Activated CD4-positive, alpha-beta T cell treated with anti-CD3 and anti-CD28 coated beads for 36 hours (primary cell): ENCODE measurements at regions of chr9 and their contacts with region 1.

Region 1: GRCh38 chr9:32378993-32379729 is 5.3 kb upstream of the ACO1 start:
- DNase-seq: peak; percentile 56
- ATAC-seq: peak; percentile 85
- H3K4me3 Mint-ChIP-seq: no peak overlapping the region
- H3K27ac Mint-ChIP-seq: no peak overlapping the region
- H3K4me1 Mint-ChIP-seq: peaks cover 15% of the 10 kb centered on the region
- H3K27me3 Mint-ChIP-seq: peaks cover 17% of the 10 kb centered on the region

Region 2: GRCh38 chr9:32398207-32398606 is 19.0 kb after region 1 on chr9:
- CTCF ChIA-PET with region 1: interaction called, 12 read pairs
- POLR2A ChIA-PET with region 1: interaction called, 3 read pairs
- intact Hi-C with region 1: no loop called
- DNase-seq: no peak
- ATAC-seq: no peak
- H3K4me3 Mint-ChIP-seq: no peak overlapping the region
- H3K27ac Mint-ChIP-seq: no peak overlapping the region
- H3K4me1 Mint-ChIP-seq: no peaks in the 10 kb centered on the region
- H3K27me3 Mint-ChIP-seq: no peaks in the 10 kb centered on the region

Region 3: DNA sequence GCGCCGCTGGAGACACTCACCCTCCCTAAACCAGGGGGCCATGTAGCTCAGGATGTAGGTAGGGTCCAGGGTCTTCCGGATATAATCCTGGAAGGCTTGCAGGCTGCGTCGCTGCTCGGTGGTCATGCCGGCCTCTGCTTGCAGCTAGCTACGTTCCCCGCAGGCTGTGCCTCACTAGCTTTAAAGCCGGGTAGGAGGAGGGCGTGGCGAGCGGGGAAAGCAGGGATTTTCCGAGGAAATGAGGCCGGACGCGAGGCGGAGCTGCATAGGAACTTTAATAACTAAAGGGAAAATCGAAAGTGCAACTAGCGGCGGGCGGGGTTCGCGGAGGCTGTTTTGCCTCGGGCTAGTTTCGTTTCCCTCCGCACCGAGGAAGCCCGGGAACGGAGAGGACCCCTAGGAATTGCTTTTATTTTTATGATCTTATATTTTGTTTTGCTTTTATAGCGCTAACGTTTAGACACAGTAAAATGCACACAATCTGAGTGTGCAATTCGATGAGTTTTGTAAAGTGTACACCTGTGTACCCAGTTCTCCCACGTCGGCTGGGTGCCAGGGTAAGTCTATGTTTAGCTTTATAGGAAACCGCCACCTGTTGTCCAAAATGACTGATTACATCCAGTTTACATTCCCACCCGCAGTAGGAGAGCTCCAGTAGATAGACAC is 147.0 kb after region 1 on chr9 and contains the start of gene RIGI:
- CTCF ChIA-PET with region 1: interaction called, 41 read pairs
- POLR2A ChIA-PET with region 1: interaction called, 3 read pairs
- intact Hi-C with region 1: loop called (anchors 1 kb)
- DNase-seq: peak; percentile 86
- ATAC-seq: peak; percentile 78
- H3K4me3 Mint-ChIP-seq: peak within 1 kb of the TSS; percentile 80
- H3K27ac Mint-ChIP-seq: peak within 1 kb of the TSS; percentile 90
- H3K4me1 Mint-ChIP-seq: peaks cover 41% of the 10 kb centered on the region
- H3K27me3 Mint-ChIP-seq: no peaks in the 10 kb centered on the region
- total RNA-seq, gene RIGI: 8.9 to 9.7 TPM

Region 4: GRCh38 chr9:32566770-32567169 is 187.6 kb after region 1 on chr9:
- CTCF ChIA-PET with region 1: interaction called, 530 read pairs
- POLR2A ChIA-PET with region 1: interaction called, 5 read pairs
- intact Hi-C with region 1: no loop called
- DNase-seq: no peak
- ATAC-seq: no peak
- H3K4me3 Mint-ChIP-seq: no peak overlapping the region
- H3K27ac Mint-ChIP-seq: no peak overlapping the region
- H3K4me1 Mint-ChIP-seq: peaks cover 20% of the 10 kb centered on the region
- H3K27me3 Mint-ChIP-seq: no peaks in the 10 kb centered on the region

Region 5: DNA sequence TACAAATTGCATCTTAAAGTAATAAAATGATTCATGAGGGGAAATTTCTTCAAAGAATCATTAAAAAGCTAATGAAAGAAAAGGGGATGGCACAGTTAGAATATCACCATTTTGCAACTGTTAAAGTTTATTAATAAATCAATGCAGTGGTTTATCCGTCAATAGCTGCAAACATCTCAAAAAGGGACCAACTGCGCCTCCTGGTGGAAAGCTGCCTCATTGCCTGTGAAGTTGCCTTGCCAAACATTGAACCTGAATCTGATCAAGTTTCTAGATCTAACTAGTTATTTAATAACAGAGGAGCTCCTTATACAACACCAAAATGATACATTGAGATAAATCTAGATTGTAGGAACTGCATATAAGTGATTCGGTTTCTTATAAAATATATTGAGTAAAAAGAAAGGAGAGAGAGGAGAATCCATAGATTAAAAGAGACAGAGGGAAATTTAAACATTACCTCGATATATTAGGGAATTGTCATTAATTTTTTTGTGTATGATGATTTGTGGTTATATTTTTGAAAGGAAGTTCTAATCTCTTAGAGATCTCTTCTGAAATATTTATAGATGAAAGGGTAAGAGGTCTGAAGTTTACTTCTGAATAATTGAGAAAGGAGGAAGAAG is 200.7 kb after region 1 on chr9:
- CTCF ChIA-PET with region 1: interaction called, 530 read pairs
- POLR2A ChIA-PET with region 1: interaction called, 8 read pairs
- intact Hi-C with region 1: loop called (anchors 1 kb)
- DNase-seq: peak; percentile 87
- ATAC-seq: no peak
- H3K4me3 Mint-ChIP-seq: no peak overlapping the region
- H3K27ac Mint-ChIP-seq: no peak overlapping the region
- H3K4me1 Mint-ChIP-seq: no peaks in the 10 kb centered on the region
- H3K27me3 Mint-ChIP-seq: peaks cover 8% of the 10 kb centered on the region

Region 6: DNA sequence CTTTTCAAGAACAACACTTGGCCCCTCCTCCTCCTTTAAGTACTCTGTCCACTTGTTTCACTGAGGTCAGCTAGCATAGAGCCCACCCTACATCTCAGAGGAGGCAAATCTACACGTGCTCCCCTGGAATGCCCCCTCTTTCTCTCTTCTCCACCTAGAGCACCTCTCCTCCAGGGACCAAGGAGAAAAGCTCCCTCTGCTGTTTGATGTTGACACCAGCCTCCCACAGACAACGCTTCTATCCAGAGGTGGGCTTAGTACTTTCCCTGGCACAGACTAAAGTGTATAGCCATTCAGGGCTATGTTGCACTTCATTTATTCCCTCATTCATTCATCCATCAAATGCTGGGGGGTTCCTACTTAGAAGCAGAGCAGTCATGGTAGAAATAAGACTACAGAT is 324.5 kb after region 1 on chr9:
- CTCF ChIA-PET with region 1: interaction called, 5 read pairs
- POLR2A ChIA-PET with region 1: no interaction called
- intact Hi-C with region 1: loop called in 1 of 2 experiments (anchors 5 kb)
- DNase-seq: no peak
- ATAC-seq: no peak
- H3K4me3 Mint-ChIP-seq: no peak overlapping the region
- H3K27ac Mint-ChIP-seq: no peak overlapping the region
- H3K4me1 Mint-ChIP-seq: no peaks in the 10 kb centered on the region
- H3K27me3 Mint-ChIP-seq: peaks cover 5% of the 10 kb centered on the region

Region 7: GRCh38 chr9:33225319-33226149 is 846.4 kb after region 1 on chr9:
- CTCF ChIA-PET with region 1: no interaction called
- POLR2A ChIA-PET with region 1: no interaction called
- intact Hi-C with region 1: loop called in 1 of 2 experiments (anchors 2 kb)
- DNase-seq: peak; percentile 85
- ATAC-seq: peak; percentile 82
- H3K4me3 Mint-ChIP-seq: no peak overlapping the region
- H3K27ac Mint-ChIP-seq: peak overlapping the region; percentile 38
- H3K4me1 Mint-ChIP-seq: peaks cover 16% of the 10 kb centered on the region
- H3K27me3 Mint-ChIP-seq: no peaks in the 10 kb centered on the region